ENCODE measurements at regions of chr22 and their contacts with region 1.

Region 1: GRCh38 chr22:16824716-16825678 is at the start of gene XKR3:
- DNase-seq: peak; percentile 37
- ATAC-seq: peak; percentile 96
- H3K4me3 ChIP-seq: peak within 1 kb of the TSS; percentile 17; the same call in 1 of the 2 replicates
- H3K27ac ChIP-seq: peak within 1 kb of the TSS; percentile 48
- H3K4me1 ChIP-seq: no peaks in the 10 kb centered on the region
- H3K27me3 ChIP-seq: no peaks in the 10 kb centered on the region
- CTCF ChIP-seq: no peak
- EP300 ChIP-seq: no peak
- POLR2A ChIP-seq: no peak
- RAD21 ChIP-seq: no peak
- polyA plus RNA-seq, gene XKR3: not detected

Region 2: GRCh38 chr22:16783930-16784354 is 41.1 kb before region 1 on chr22:
- CTCF ChIA-PET with region 1: no interaction called
- POLR2A ChIA-PET with region 1: no interaction called
- RAD21 ChIA-PET with region 1: no interaction called
- SMC1A ChIA-PET with region 1: no interaction called
- in situ Hi-C with region 1: no loop called
- intact Hi-C with region 1: loop called (anchors 5 kb)
- DNase-seq: no peak
- ATAC-seq: peak; percentile 93
- H3K4me3 ChIP-seq: no peak overlapping the region
- H3K27ac ChIP-seq: no peak overlapping the region
- H3K4me1 ChIP-seq: no peaks in the 10 kb centered on the region
- H3K27me3 ChIP-seq: no peaks in the 10 kb centered on the region
- CTCF ChIP-seq: peak; percentile 39 to 71 (median 48); a peak in 5 of 6 replicates
- EP300 ChIP-seq: no peak
- POLR2A ChIP-seq: no peak
- RAD21 ChIP-seq: no peak

Region 3: GRCh38 chr22:17158568-17159503 is 333.8 kb after region 1 on chr22 and contains the start of gene HDHD5:
- CTCF ChIA-PET with region 1: no interaction called
- POLR2A ChIA-PET with region 1: no interaction called
- RAD21 ChIA-PET with region 1: no interaction called
- SMC1A ChIA-PET with region 1: no interaction called
- in situ Hi-C with region 1: no loop called
- intact Hi-C with region 1: loop called (anchors 10 kb)
- DNase-seq: no peak
- ATAC-seq: peak; percentile 90
- H3K4me3 ChIP-seq: peak within 1 kb of the TSS; percentile 79
- H3K27ac ChIP-seq: peak within 1 kb of the TSS; percentile 61
- H3K4me1 ChIP-seq: peaks cover 3% of the 10 kb centered on the region; the same call in 1 of the 2 replicates
- H3K27me3 ChIP-seq: no peaks in the 10 kb centered on the region
- CTCF ChIP-seq: no peak
- EP300 ChIP-seq: no peak
- POLR2A ChIP-seq: peak; percentile 47
- RAD21 ChIP-seq: no peak
- polyA plus RNA-seq, gene HDHD5: 1.7 to 7.7 TPM